PC-9 (cell line): ENCODE measurements at regions of chr4 and their contacts with region 1.

Region 1: GRCh38 chr4:159071178-159071991 is 31.5 kb upstream of the RAPGEF2 start:
- DNase-seq: peak; percentile 40 to 85
- H3K4me3 ChIP-seq: 0 out of 2 replicates have a peak overlapping the region, but pooled peaks have one; percentile 14
- H3K27ac ChIP-seq: peak overlapping the region; percentile 94
- H3K4me1 ChIP-seq: peaks cover 19% of the 10 kb centered on the region
- H3K27me3 ChIP-seq: no peaks in the 10 kb centered on the region
- CTCF ChIP-seq: no peak

Region 2: DNA sequence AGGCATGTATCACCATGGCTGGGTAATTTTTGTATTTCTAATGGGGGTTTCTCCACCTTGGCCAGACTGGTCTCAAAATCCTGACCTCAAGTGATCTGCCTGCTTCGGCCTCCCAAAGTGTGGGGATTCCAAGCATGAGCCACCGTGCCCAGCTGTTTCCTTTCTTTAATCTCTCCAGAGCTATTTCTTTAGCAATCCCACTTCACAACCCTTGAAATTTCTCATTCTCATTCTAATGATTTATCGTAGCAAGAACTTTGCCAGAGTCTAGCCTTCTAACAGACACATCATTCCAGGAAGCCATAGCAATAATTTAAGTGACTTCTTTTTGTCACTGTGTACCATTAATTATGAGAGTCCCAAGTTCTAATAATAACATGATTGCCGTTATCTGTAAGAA is 481.1 kb before region 1 on chr4:
- CTCF ChIA-PET with region 1: no interaction called
- POLR2A ChIA-PET with region 1: no interaction called
- intact Hi-C with region 1: no loop called
- DNase-seq: no peak
- H3K4me3 ChIP-seq: no peak overlapping the region
- H3K27ac ChIP-seq: no peak overlapping the region
- H3K4me1 ChIP-seq: no peaks in the 10 kb centered on the region
- H3K27me3 ChIP-seq: no peaks in the 10 kb centered on the region
- CTCF ChIP-seq: no peak

Region 3: GRCh38 chr4:159003420-159004253 is 67.7 kb before region 1 on chr4:
- CTCF ChIA-PET with region 1: no interaction called
- POLR2A ChIA-PET with region 1: interaction called, 18 read pairs
- intact Hi-C with region 1: no loop called
- DNase-seq: no peak
- H3K4me3 ChIP-seq: no peak overlapping the region
- H3K27ac ChIP-seq: 0 out of 2 replicates have a peak overlapping the region, but pooled peaks have one; percentile 29
- H3K4me1 ChIP-seq: peaks cover 31% of the 10 kb centered on the region
- H3K27me3 ChIP-seq: no peaks in the 10 kb centered on the region
- CTCF ChIP-seq: no peak

Region 4: GRCh38 chr4:160026720-160027119 is 955.3 kb after region 1 on chr4:
- CTCF ChIA-PET with region 1: no interaction called
- POLR2A ChIA-PET with region 1: no interaction called
- intact Hi-C with region 1: no loop called
- DNase-seq: peak; percentile 44 to 66
- H3K4me3 ChIP-seq: no peak overlapping the region
- H3K27ac ChIP-seq: 0 out of 2 replicates have a peak overlapping the region, but pooled peaks have one; percentile 47
- H3K4me1 ChIP-seq: peaks cover 3% of the 10 kb centered on the region
- H3K27me3 ChIP-seq: no peaks in the 10 kb centered on the region
- CTCF ChIP-seq: no peak